Spleen (tissue), 13 donors: ENCODE measurements at regions of chr17 and their contacts with region 1.

Region 1: DNA sequence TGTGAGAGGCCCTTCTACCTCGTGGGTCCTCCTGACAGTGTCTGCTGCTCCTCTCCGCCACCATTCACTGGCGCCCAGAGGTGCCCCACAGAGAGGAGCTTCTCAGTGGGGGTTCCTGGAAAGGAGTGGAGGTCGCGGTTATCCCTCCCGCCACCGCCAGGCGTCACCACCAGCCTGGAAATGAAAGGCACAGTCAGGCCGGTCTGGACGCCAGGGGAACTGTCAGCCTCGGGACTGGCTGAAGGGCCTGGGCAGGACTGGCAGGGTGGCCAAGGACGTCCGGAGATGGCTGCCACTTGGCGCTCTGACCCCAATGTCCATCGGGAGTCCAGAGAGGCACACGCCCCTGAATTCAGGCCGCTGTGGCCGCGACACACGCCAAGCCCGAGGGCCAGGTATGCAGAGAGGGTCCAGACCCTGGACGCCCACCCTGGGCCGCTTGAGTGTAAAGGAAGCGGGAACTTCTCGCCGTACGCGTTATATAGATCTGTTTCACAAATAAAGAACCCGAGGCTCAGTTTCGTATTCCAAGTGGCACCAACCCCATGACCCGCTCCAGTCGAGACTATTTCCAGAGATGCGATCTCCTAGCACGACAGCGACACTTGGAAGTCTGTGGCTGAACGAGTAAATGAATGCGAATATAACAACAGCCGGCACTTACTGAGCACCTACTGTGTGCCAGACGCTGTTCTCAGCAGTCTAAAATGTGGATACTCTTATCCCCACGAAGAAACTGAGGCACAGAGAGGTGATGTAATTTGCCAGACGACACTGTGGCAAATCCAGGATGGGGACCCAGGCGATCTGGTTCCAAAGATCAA is 7.6 kb upstream of the NXPH3 start:
- DNase-seq: peak; percentile 96
- H3K4me3 ChIP-seq: peak overlapping the region; percentile 16 to 65 (median 33)
- H3K27ac ChIP-seq: peak overlapping the region in 6 of 8 donors; percentile 36 to 68 (median 52)
- H3K4me1 ChIP-seq: peaks cover 3 to 45% (median 19%) of the 10 kb centered on the region in 6 donors
- H3K27me3 ChIP-seq: peaks cover 0 to 69% (median 0%) of the 10 kb centered on the region in 7 donors
- CTCF ChIP-seq: peak; percentile 90 to 99 (median 96)
- POLR2A ChIP-seq: no peak

Region 2: GRCh38 chr17:49788478-49789242 is 220.6 kb after region 1 on chr17 and contains the start of gene KAT7:
- intact Hi-C with region 1: loop called (anchors 5 kb)
- DNase-seq: peak; percentile 99
- H3K4me3 ChIP-seq: peak within 1 kb of the TSS; percentile 79 to 95 (median 91)
- H3K27ac ChIP-seq: peak within 1 kb of the TSS; percentile 94 to 100 (median 98)
- H3K4me1 ChIP-seq: peaks cover 26 to 58% (median 54%) of the 10 kb centered on the region in 6 donors
- H3K27me3 ChIP-seq: no peaks in the 10 kb centered on the region
- CTCF ChIP-seq: peak in 4 of 11 experiments; percentile 16 to 37 (median 22)
- POLR2A ChIP-seq: peak; percentile 55 to 72 (median 57)
- total RNA-seq, gene KAT7: 38.1 to 81.2 (median 65.0) TPM